Activated T-helper 1 cell treated with anti-CD3 and anti-CD28 coated beads, Interleukin-12 subunit alpha, Interleukin-12 subunit beta, Interleukin-2, Interleukin-4 antibody, amounts not matched to agents 30 ng/mL and 10 ng/mL and 1 ng/mL, durations not matched to agents 14 hours and 24 hours and 36 hours (primary cell): ENCODE measurements at regions of chr7 and their contacts with region 1.

Region 1: GRCh38 chr7:5423844-5424688 is 432 bp upstream of the TNRC18 start:
- DNase-seq: no peak
- H3K4me3 Mint-ChIP-seq: peak overlapping the region; percentile 79
- H3K27ac Mint-ChIP-seq: peak overlapping the region; percentile 81
- H3K4me1 Mint-ChIP-seq: peaks cover 17% of the 10 kb centered on the region
- H3K27me3 Mint-ChIP-seq: peaks cover 48% of the 10 kb centered on the region

Region 2: GRCh38 chr7:5045558-5046396 is 378.3 kb before region 1 on chr7 and contains the start of gene RBAK:
- intact Hi-C with region 1: loop called (anchors 5 kb)
- DNase-seq: peak; percentile 87
- H3K4me3 Mint-ChIP-seq: peak within 1 kb of the TSS; percentile 89
- H3K27ac Mint-ChIP-seq: peak within 1 kb of the TSS; percentile 88
- H3K4me1 Mint-ChIP-seq: peaks cover 24% of the 10 kb centered on the region
- H3K27me3 Mint-ChIP-seq: no peaks in the 10 kb centered on the region
- total RNA-seq, gene RBAK: 12.5 and 13.0 TPM in 2 replicates

Region 3: DNA sequence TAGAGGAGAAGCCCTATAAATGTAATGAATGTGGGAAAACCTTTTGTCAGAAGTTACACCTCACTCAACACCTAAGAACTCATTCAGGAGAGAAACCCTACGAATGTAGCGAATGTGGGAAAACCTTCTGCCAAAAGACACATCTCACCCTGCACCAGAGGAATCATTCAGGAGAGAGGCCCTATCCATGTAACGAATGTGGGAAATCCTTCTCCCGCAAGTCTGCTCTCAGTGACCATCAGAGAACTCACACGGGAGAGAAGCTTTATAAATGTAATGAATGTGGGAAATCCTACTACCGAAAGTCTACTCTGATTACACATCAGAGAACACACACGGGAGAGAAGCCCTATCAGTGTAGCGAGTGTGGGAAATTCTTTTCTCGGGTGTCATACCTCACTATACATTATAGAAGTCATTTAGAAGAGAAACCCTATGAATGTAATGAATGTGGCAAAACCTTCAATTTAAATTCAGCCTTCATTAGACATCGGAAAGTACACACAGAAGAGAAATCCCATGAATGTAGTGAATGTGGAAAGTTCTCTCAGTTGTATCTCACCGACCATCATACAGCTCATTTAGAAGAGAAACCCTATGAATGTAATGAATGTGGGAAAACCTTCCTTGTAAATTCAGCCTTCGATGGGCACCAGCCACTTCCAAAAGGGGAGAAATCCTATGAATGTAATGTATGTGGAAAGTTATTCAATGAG is 359.5 kb before region 1 on chr7:
- intact Hi-C with region 1: loop called (anchors 5 kb)
- DNase-seq: no peak
- H3K4me3 Mint-ChIP-seq: no peak overlapping the region
- H3K27ac Mint-ChIP-seq: peak overlapping the region; percentile 16
- H3K4me1 Mint-ChIP-seq: no peaks in the 10 kb centered on the region
- H3K27me3 Mint-ChIP-seq: no peaks in the 10 kb centered on the region

Region 4: GRCh38 chr7:5243261-5243660 is 180.8 kb before region 1 on chr7:
- intact Hi-C with region 1: loop called (anchors 5 kb)
- DNase-seq: no peak
- H3K4me3 Mint-ChIP-seq: no peak overlapping the region
- H3K27ac Mint-ChIP-seq: no peak overlapping the region
- H3K4me1 Mint-ChIP-seq: peaks cover 14% of the 10 kb centered on the region
- H3K27me3 Mint-ChIP-seq: peaks cover 22% of the 10 kb centered on the region